Right ventricle myocardium inferior (tissue), 1 donor: ENCODE measurements at regions of chr6 and their contacts with region 1.

Region 1: DNA sequence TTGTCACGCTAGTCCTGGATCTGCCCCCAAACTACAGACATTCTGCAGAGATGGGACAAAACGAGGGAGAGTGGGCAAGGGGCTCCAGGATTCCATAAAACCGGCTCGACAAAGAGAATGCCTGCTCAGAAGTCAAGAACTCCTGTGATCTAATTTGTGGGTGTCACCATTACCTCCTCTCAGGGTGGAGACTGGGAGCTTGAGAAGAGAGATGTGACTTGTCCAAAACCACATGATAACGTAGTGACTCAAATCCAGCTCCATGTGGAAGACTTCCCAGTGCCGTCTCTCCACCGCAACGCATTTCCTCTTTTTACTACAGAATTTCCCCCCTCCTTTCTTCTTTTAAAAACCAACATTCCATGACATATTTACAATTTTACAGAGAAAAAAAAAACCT is 44.3 kb downstream of the TRERF1 start:
- DNase-seq: no peak
- ATAC-seq: peak; percentile 68

Region 2: GRCh38 chr6:42453031-42453653 is 45.8 kb after region 1 on chr6:
- intact Hi-C with region 1: loop called (anchors 5 kb)
- DNase-seq: peak; percentile 92
- ATAC-seq: peak; percentile 93